ENCODE measurements at regions of chr11 and their contacts with region 1.

Region 1: DNA sequence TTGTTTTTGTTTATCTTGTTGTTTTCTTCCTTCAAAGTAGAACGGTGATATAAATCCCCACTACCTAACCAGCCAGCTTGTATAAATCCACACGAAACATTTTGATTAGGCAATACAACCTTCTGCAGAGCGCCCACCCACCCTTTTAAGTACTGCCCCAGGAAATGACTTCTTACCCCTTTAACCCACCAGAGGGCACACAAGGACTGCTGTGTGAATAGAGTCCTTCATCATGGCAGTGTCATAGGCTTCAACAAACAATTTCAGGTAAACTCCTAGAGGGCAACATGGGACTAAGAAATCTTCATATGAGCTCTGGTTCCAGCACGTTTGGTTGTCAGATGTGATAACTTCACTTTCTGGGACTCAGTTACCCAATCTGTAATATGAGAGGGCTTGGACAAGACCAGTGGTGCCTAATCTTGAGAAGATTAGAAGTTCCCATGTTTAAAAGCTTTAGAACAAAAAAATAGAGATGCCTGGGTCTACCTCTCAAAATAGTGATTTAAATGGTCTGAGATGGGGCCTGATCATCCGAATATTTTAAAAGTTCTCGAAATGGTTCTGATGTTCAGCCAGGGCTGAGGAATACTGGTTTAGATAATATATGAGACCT is 56.1 kb downstream of the PIWIL4 start:
- DNase-seq: peak; percentile 77
- H3K4me3 ChIP-seq: peak overlapping the region in 1 of 2 experiments; percentile 10; a peak in 1 of 4 replicates
- H3K27ac ChIP-seq: no peak overlapping the region
- H3K4me1 ChIP-seq: no peaks in the 10 kb centered on the region
- H3K27me3 ChIP-seq: no peaks in the 10 kb centered on the region
- CTCF ChIP-seq: peak; percentile 82
- EP300 ChIP-seq: no peak
- RAD21 ChIP-seq: peak; percentile 99

Region 2: DNA sequence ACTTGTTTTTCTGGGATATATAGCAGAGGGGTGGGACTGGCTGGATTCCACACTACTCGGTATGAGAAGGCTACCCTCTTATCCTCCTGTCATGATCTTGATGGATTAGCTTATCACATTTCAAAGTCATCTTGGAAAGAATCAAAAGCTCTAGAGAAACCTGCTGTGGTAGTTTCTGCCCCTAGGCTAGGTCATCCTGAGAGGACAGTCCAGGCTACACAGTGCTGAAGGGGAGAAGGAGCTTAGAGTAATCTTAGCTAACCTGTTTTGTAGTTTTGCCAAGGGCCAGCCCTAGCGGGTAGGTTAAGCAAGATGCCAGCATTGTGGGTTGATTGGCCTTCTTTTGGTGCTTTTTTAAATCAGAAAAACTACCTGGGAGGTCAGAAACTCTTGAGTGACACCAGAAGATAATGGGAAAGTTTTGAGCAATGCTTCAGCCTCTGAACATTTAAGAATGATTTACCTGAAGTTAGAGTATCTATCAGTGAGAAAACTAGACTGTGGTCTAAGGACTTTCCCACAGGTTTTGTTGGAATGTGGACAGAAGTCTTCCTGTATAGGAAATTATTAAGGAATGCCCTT is 34.8 kb before region 1 on chr11:
- CTCF ChIA-PET with region 1: interaction called, 11 read pairs
- POLR2A ChIA-PET with region 1: no interaction called
- DNase-seq: no peak
- H3K4me3 ChIP-seq: no peak overlapping the region
- H3K27ac ChIP-seq: no peak overlapping the region
- H3K4me1 ChIP-seq: no peaks in the 10 kb centered on the region; a peak in 1 of 4 replicates
- H3K27me3 ChIP-seq: no peaks in the 10 kb centered on the region
- CTCF ChIP-seq: no peak
- EP300 ChIP-seq: no peak
- RAD21 ChIP-seq: no peak

Region 3: DNA sequence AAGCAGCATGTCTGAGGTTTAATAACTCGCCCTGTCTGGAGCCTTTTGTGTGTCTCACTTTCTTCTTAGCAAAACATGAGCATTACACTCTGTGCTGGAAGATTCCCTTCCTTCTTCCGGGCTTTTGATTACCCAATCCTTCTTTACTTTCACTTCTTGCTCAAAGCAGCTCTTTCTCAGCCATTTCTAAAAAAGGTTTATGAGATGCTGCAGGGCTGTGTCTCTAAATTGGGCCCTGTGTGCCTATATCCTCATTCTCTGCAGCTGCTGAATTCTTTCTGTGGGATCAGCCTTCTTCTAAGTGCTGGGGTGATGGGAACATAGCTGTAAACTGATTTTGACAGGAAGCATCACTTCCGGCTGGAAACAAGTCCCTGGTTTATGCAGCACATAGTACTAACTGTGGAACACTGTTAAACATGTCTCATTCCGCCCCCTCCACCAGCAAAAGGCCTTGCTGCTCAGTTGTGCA is 15.7 kb after region 1 on chr11:
- CTCF ChIA-PET with region 1: interaction called, 30 read pairs
- POLR2A ChIA-PET with region 1: no interaction called
- DNase-seq: no peak
- H3K4me3 ChIP-seq: no peak overlapping the region
- H3K27ac ChIP-seq: no peak overlapping the region
- H3K4me1 ChIP-seq: peaks cover 0 to 2% of the 10 kb centered on the region in 2 experiments; a peak in 2 of 4 replicates
- H3K27me3 ChIP-seq: no peaks in the 10 kb centered on the region
- CTCF ChIP-seq: no peak
- EP300 ChIP-seq: no peak
- RAD21 ChIP-seq: no peak

Region 4: GRCh38 chr11:94681852-94682251 is 58.6 kb after region 1 on chr11:
- CTCF ChIA-PET with region 1: no interaction called
- POLR2A ChIA-PET with region 1: no interaction called
- DNase-seq: no peak
- H3K4me3 ChIP-seq: no peak overlapping the region
- H3K27ac ChIP-seq: no peak overlapping the region
- H3K4me1 ChIP-seq: no peaks in the 10 kb centered on the region
- H3K27me3 ChIP-seq: no peaks in the 10 kb centered on the region
- CTCF ChIP-seq: no peak
- EP300 ChIP-seq: no peak
- RAD21 ChIP-seq: no peak

Region 5: DNA sequence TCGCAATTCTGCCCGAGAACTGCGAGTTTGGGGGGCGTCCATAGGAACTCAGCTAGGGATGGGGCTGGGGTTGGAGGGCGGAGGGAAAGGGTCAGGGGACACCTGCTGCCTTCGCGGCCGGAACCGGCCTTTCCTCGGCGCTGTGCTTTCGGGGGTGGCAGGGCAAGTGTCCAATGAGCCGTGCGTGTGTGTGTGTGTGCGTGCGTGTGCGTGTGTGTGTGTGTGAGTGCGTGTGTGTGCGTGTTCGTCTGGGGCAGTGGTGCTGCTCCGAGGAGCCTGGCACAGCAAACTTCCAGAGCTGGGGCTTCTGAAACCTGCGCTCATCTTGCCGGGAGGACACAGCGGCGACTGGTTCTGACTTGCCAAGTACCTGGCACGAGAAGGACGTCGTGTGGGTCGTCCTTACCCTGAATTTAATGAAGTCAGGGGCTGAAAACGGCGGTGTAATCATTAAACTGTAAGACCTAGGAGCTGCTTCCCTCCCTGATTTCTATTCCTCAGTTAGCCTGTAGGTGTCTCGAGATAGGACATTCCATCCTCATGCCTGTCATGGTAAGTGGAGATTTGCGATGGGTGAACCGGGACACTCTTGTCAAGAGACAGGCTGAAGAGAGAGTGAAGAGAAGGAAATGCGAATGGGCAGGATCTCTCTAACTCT is 117.9 kb after region 1 on chr11:
- CTCF ChIA-PET with region 1: interaction called, 59 read pairs
- POLR2A ChIA-PET with region 1: no interaction called
- DNase-seq: peak; percentile 82
- H3K4me3 ChIP-seq: peak overlapping the region; percentile 63 to 69
- H3K27ac ChIP-seq: no peak overlapping the region; a peak in 1 of 4 replicates
- H3K4me1 ChIP-seq: peaks cover 8 to 10% of the 10 kb centered on the region in 2 experiments; a peak in 1 of 4 replicates
- H3K27me3 ChIP-seq: no peaks in the 10 kb centered on the region
- CTCF ChIP-seq: peak; percentile 60
- EP300 ChIP-seq: no peak
- RAD21 ChIP-seq: peak; percentile 46

Region 6: GRCh38 chr11:94786264-94787126 is 163.3 kb after region 1 on chr11:
- CTCF ChIA-PET with region 1: interaction called, 18 read pairs
- POLR2A ChIA-PET with region 1: no interaction called
- DNase-seq: peak; percentile 46
- H3K4me3 ChIP-seq: no peak overlapping the region
- H3K27ac ChIP-seq: peak overlapping the region in 1 of 2 experiments; percentile 19; a peak in 2 of 4 replicates
- H3K4me1 ChIP-seq: peaks cover 16 to 62% of the 10 kb centered on the region in 2 experiments
- H3K27me3 ChIP-seq: no peaks in the 10 kb centered on the region
- CTCF ChIP-seq: peak; percentile 71
- EP300 ChIP-seq: no peak
- RAD21 ChIP-seq: peak; percentile 57

Region 7: DNA sequence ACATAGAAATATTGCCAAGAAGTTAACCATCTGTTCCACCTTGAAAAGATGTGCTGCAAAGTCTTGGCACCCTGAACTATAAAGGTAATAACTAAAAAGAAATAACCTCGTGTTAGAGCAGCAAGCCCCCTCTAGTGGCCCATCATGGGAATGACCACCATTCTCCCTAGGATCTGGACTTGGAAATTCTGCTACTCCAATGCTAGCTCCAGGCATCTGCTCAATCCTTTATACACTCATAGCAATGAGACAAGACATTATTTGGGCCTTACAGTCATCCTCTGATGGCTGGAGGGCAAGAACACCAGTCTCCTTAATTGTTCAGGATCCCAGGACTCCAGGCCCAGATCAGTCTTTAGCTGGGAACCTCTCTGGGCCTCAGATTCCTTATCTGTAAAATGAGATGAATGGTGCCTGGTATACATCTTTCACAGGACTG is 274.1 kb after region 1 on chr11:
- CTCF ChIA-PET with region 1: interaction called, 74 read pairs
- POLR2A ChIA-PET with region 1: no interaction called
- DNase-seq: peak; percentile 63
- H3K4me3 ChIP-seq: no peak overlapping the region; a peak in 1 of 4 replicates
- H3K27ac ChIP-seq: peak overlapping the region in 1 of 2 experiments; percentile 22; a peak in 1 of 4 replicates
- H3K4me1 ChIP-seq: peaks cover 0 to 5% of the 10 kb centered on the region in 2 experiments; a peak in 1 of 4 replicates
- H3K27me3 ChIP-seq: no peaks in the 10 kb centered on the region
- CTCF ChIP-seq: peak; percentile 95
- EP300 ChIP-seq: no peak
- RAD21 ChIP-seq: peak; percentile 83

Measured in SK-N-SH (cell line).